PC-9 (cell line): ENCODE measurements at regions of chr2 and their contacts with region 1.

Region 1: GRCh38 chr2:10659898-10660568 is 29.7 kb downstream of the NOL10 start:
- DNase-seq: peak; percentile 67 to 76
- H3K4me3 ChIP-seq: no peak overlapping the region
- H3K27ac ChIP-seq: no peak overlapping the region
- H3K4me1 ChIP-seq: peaks cover 24% of the 10 kb centered on the region
- H3K27me3 ChIP-seq: no peaks in the 10 kb centered on the region
- CTCF ChIP-seq: peak; percentile 84

Region 2: GRCh38 chr2:10302479-10303180 is 357.4 kb before region 1 on chr2 and contains the start of gene HPCAL1:
- CTCF ChIA-PET with region 1: no interaction called
- POLR2A ChIA-PET with region 1: no interaction called
- intact Hi-C with region 1: loop called (anchors 10 kb)
- DNase-seq: peak; percentile 85 to 96
- H3K4me3 ChIP-seq: peak within 1 kb of the TSS; percentile 92
- H3K27ac ChIP-seq: peak within 1 kb of the TSS; percentile 83
- H3K4me1 ChIP-seq: peaks cover 71% of the 10 kb centered on the region
- H3K27me3 ChIP-seq: no peaks in the 10 kb centered on the region
- CTCF ChIP-seq: peak; percentile 63
- total RNA-seq, gene HPCAL1: 91.1 and 105 TPM in 2 replicates

Region 3: DNA sequence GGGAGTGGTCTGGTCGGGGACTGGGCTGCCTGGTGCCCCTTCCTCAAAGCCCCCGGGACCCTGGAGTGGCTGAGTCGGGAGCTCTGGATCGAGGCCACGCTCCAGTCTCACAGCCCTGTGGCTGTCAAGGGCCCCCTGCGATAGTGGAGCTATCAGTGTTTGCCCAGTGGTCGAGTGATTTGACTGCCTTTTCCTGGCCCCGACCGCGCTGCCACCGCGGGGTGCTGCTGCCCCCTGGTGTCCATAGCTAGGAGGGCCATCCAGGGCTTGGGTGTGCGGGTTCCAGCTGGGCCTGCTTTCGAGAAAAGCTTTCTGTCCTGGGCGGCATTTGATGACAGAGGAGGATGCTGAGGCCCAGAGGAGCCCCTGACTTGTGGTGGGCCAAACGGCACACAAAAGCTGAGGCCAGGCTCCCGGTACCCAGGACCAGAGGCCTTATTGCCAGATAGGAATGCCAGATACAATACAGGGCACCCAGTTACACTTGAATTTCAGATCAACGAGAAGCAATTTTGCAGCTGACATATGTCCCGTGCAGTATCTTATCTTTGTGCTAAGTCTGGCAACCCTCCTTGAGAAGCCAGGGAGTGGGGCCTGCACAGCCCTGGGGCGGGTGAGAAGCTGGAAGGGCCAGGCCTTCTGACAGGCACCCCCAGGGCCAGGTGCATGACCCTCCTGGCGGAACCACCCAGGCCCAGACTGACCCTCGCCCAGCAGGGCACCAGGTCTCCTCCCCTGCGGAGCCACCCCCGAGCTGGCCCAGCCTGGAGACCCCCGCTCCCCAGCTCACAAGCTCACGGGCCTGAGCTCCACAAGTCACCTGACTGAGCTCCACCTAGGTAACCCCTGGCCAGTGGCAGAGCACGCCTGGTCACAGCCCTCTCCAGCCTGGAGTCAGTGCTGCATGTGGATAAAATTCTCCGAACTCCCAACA is 224.9 kb before region 1 on chr2:
- CTCF ChIA-PET with region 1: interaction called, 7 read pairs
- POLR2A ChIA-PET with region 1: no interaction called
- intact Hi-C with region 1: loop called (anchors 1 kb)
- DNase-seq: peak; percentile 62 to 84
- H3K4me3 ChIP-seq: no peak overlapping the region
- H3K27ac ChIP-seq: no peak overlapping the region
- H3K4me1 ChIP-seq: no peaks in the 10 kb centered on the region; the same call in 1 of the 2 replicates
- H3K27me3 ChIP-seq: no peaks in the 10 kb centered on the region
- CTCF ChIP-seq: peak; percentile 97

Region 4: DNA sequence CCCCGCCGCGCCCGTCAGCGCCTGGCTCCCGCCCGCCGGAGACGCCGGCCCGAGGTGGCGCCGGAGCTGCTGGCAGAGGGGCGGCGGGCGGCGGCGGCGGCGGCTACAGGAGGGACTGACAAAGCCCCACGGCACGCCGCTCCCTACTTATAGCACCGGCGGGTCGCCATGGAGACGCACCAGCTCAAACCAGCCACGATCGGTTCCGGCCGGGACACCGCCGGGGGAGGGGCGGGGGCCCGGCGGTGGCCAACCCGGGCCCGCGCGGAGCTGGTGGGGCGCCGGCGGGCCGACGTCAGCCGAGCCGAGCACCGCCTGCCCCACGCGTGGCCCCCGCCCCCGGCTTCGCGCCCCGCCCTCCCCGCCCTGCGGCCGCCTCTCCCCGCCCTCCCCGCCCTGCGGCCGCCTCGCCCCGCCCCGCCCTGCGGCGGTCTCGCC is 211.8 kb before region 1 on chr2 and contains the start of gene ODC1:
- CTCF ChIA-PET with region 1: interaction called, 9 read pairs
- POLR2A ChIA-PET with region 1: no interaction called
- intact Hi-C with region 1: loop called (anchors 2 kb)
- DNase-seq: peak; percentile 75 to 93
- H3K4me3 ChIP-seq: peak within 1 kb of the TSS; percentile 75
- H3K27ac ChIP-seq: peak within 1 kb of the TSS; percentile 7
- H3K4me1 ChIP-seq: peaks cover 55% of the 10 kb centered on the region
- H3K27me3 ChIP-seq: no peaks in the 10 kb centered on the region
- CTCF ChIP-seq: no peak
- total RNA-seq, gene ODC1: 39.9 and 40.5 TPM in 2 replicates

Region 5: GRCh38 chr2:10584796-10585475 is 75.1 kb before region 1 on chr2:
- CTCF ChIA-PET with region 1: interaction called, 6 read pairs
- POLR2A ChIA-PET with region 1: no interaction called
- intact Hi-C with region 1: loop called (anchors 5 kb)
- DNase-seq: peak; percentile 73 to 98
- H3K4me3 ChIP-seq: peak overlapping the region; percentile 13; the same call in 1 of the 2 replicates
- H3K27ac ChIP-seq: peak overlapping the region; percentile 72
- H3K4me1 ChIP-seq: peaks cover 28% of the 10 kb centered on the region
- H3K27me3 ChIP-seq: no peaks in the 10 kb centered on the region
- CTCF ChIP-seq: no peak